ENCODE measurements at regions of chr7 and their contacts with region 1.

Region 1: GRCh38 chr7:84701524-84702306 is 485.1 kb downstream of the SEMA3D start:
- DNase-seq: peak; percentile 95
- H3K4me3 ChIP-seq: peak overlapping the region in 1 of 3 experiments; percentile 5
- H3K27ac ChIP-seq: peak overlapping the region; percentile 97
- H3K4me1 ChIP-seq: peaks cover 31% of the 10 kb centered on the region
- H3K27me3 ChIP-seq: no peaks in the 10 kb centered on the region
- CTCF ChIP-seq: no peak
- POLR2A ChIP-seq: no peak

Region 2: DNA sequence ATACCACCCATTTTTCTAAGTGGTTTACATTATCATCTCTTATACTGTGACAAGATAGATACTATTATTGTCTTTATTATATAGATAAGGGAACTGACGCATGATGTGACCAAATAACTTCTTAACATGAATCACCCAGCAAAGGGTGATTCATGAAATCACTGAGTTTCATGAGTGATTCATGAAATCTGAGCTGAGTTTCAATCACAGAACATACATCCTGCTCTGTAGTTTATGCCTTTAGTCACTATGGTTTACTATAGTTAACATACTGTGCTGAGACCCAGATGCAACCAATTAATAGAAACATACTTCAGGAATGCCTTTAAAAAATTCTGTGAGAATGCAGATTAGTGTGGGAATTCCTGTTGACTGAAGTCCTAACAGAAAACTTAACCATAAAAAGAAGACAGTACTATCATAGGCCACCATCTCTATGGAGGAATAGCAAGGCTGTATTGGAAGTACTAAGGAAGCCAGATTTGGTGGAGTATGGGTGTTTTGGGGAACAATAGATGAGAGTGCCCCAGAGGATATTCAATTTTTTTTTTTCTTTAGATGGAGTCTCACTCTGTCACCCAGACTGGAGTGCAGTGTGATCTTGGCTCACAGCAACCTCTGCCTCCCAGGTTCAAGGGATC is 464.1 kb before region 1 on chr7:
- CTCF ChIA-PET with region 1: no interaction called
- POLR2A ChIA-PET with region 1: no interaction called
- dilution Hi-C with region 1: no loop called
- intact Hi-C with region 1: loop called (anchors 1 kb)
- DNase-seq: peak; percentile 81
- H3K4me3 ChIP-seq: no peak overlapping the region
- H3K27ac ChIP-seq: peak overlapping the region; percentile 79
- H3K4me1 ChIP-seq: peaks cover 24% of the 10 kb centered on the region
- H3K27me3 ChIP-seq: no peaks in the 10 kb centered on the region
- CTCF ChIP-seq: no peak
- POLR2A ChIP-seq: no peak

Region 3: DNA sequence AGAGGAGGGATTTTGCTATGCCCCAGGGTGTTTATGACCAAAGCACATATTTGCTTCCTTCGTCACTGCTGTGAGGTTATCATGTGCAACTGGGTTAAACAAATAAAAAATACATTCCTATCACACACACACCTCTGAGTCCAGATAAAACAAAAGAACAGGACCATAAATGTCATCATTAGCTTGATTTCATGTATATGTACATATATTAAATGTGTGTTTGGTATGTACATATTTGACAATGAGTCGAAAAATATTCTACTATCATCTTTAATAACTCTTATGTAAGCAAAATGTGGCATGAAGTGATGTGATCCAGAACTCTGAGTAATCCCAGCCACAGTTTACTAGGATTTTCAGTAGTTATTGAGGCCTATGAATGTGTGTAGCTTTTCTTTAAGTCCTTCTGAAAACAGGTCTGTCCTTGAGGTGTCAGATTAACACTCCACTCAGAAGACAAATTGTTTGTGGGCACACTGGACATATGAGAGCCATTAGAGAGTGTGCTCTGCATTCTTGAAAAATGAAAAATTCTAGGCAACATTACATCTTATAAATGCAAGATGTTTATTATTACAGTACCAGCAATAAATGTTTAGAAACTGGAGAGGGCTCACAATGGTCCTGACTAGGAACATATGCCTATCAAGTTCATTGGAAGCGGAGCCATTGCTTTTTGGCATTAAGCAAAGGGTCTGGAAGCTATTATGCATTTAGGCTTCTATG is 172.1 kb before region 1 on chr7:
- CTCF ChIA-PET with region 1: no interaction called
- POLR2A ChIA-PET with region 1: no interaction called
- dilution Hi-C with region 1: no loop called
- intact Hi-C with region 1: loop called (anchors 10 kb)
- DNase-seq: peak; percentile 75
- H3K4me3 ChIP-seq: no peak overlapping the region
- H3K27ac ChIP-seq: peak overlapping the region; percentile 46
- H3K4me1 ChIP-seq: peaks cover 14% of the 10 kb centered on the region
- H3K27me3 ChIP-seq: no peaks in the 10 kb centered on the region
- CTCF ChIP-seq: no peak
- POLR2A ChIP-seq: no peak

Region 4: GRCh38 chr7:84669177-84669732 is 32.5 kb before region 1 on chr7:
- CTCF ChIA-PET with region 1: no interaction called
- POLR2A ChIA-PET with region 1: no interaction called
- dilution Hi-C with region 1: no loop called
- intact Hi-C with region 1: loop called (anchors 1 kb)
- DNase-seq: peak; percentile 86
- H3K4me3 ChIP-seq: no peak overlapping the region
- H3K27ac ChIP-seq: peak overlapping the region; percentile 76
- H3K4me1 ChIP-seq: peaks cover 27% of the 10 kb centered on the region
- H3K27me3 ChIP-seq: no peaks in the 10 kb centered on the region
- CTCF ChIP-seq: no peak
- POLR2A ChIP-seq: no peak

Region 5: DNA sequence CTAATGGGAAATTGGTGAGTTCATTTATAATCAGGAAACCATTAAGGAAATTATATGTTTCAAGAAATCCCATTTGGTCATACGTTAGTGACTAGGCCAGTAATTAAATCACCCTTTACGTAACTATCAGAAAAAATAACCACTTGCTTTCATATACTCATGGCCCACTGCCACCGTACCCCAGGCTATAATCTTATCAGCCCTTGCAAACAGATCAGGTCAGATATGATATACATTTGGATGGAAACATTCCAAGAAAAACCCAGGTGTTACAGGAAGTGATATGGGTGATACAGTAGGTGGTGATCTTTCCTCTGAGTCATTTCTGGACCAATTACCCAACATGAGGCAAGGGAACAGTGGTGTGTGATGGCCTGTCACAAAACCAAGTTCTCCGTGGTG is 26.1 kb before region 1 on chr7:
- CTCF ChIA-PET with region 1: interaction called, 3 read pairs
- POLR2A ChIA-PET with region 1: no interaction called
- dilution Hi-C with region 1: no loop called
- intact Hi-C with region 1: loop called (anchors 1 kb)
- DNase-seq: peak; percentile 85
- H3K4me3 ChIP-seq: no peak overlapping the region
- H3K27ac ChIP-seq: peak overlapping the region; percentile 16
- H3K4me1 ChIP-seq: peaks cover 26% of the 10 kb centered on the region
- H3K27me3 ChIP-seq: no peaks in the 10 kb centered on the region
- CTCF ChIP-seq: no peak
- POLR2A ChIP-seq: peak; percentile 29

Region 6: DNA sequence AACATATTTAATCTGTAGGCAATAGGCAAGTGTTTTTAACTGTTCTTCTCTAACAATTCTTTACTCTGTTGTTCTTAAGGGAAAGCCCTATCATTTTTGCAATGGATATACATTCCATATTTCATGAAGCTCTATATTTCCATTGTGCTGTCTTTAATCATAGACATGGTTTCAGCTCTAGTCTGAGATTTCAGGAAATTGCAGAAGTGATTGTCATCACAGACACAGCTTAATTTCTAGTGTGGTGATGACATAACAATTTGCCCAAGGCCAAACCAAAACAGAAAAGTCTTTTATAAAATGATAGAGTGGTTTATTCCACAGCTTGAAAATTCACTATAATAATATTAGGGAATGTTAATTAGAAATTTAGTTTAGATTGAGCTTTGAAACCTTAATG is 13.0 kb before region 1 on chr7:
- CTCF ChIA-PET with region 1: interaction called, 10 read pairs
- POLR2A ChIA-PET with region 1: no interaction called
- dilution Hi-C with region 1: no loop called
- intact Hi-C with region 1: loop called (anchors 1 kb)
- DNase-seq: peak; percentile 75
- H3K4me3 ChIP-seq: no peak overlapping the region
- H3K27ac ChIP-seq: peak overlapping the region; percentile 78
- H3K4me1 ChIP-seq: peaks cover 16% of the 10 kb centered on the region
- H3K27me3 ChIP-seq: no peaks in the 10 kb centered on the region
- CTCF ChIP-seq: no peak
- POLR2A ChIP-seq: no peak

Measured in endothelial cell of umbilical vein (primary cell).